GM10248 (cell line): ENCODE measurements at regions of chr10 and their contacts with region 1.

Region 1: DNA sequence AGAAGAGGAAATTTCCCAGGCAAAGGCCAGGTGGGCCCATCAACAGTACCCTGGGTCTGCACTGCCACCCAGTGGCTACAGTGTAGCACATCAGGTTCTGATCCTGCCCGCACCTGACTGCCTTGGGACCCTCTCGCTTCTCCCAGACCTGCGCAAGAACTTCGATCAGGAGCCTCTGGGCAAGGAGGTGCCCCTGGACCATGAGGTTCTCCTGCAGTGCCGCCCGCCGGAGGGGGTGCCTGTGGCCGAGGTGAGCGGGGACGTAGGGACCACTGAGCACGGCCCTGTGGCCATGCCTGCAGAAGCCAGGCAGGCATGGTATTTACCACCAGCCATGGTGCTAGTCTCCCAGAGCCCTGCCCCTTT is 33.9 kb upstream of the SLC29A3 start:
- DNase-seq: peak; percentile 78
- CTCF ChIP-seq: peak; percentile 57

Region 2: DNA sequence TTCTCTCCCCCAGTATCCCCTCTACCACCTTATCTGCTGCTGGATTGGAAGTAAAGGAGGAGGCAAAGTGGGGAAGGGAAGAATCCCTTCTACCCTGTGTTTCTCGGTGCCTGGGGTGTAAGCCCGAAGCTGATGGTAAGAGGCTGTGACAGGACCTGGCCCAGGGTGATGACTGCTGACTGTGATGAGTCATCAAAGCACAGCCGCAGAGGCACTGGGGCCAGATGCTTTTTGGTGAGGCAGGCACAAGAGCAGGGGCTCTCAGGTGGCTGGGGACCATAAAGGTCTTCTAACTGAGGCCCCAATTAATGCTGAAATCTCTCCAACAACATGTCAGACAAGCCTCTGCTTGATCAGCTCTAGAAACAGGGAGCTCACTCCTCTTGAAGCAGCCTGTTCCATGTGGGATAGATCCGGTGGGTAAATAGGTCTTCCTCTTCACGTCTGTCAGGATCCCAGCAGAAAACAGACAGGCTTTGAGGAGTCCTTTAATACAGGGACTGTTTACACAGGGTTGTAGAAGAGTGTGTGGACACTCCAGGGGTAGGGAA is 310.7 kb before region 1 on chr10:
- CTCF ChIA-PET with region 1: no interaction called
- POLR2A ChIA-PET with region 1: no interaction called
- DNase-seq: no peak
- CTCF ChIP-seq: no peak

Region 3: DNA sequence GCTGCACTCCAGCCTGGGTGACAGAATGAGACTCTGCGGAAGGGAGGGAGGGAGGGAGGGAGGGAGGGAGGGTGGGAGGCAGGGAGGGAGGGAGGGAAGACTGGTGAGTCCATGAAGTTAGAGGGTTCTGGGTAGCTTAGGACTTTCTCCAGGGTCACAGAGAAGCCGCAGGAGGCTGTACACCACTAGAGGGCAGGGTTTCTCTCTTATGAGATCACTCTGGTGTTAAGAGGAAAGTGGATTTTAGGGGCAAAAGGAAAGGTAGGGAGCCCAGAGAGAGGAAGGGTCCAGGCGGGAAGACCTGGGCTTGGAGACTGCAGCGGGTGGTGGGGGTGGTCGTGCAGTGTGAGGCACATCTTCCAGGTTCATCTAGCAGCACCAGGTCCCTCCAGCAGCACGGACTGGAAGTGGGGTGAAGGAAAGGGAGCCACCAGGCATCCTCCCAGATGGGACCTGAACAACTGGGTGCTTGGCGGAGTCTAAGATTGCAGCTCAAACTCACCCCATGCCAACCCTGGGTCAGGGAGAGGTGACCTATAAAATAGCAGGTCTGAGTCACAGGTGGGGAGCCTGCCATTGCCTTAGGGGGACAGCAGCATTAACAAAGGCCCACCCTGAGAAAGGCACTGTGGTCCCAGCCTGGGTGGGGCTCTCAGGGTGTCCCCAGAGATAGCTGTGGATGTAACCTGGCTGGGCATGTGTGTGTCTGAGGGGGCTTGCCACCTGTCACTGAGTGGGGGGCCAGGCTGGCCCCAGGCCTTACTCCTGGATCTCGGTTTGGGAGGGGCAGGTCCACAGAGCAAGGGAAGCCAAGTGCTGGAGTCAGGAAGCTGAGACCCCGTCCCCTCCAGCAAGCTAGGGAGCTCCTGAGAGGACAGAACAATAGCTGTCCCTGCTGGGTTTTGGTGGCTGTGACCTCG is 14.6 kb before region 1 on chr10:
- CTCF ChIA-PET with region 1: interaction called, 15 read pairs
- POLR2A ChIA-PET with region 1: no interaction called
- DNase-seq: peak; percentile 78
- CTCF ChIP-seq: peak; percentile 78